ENCODE measurements at regions of chr14 and their contacts with region 1.

Region 1: GRCh38 chr14:52961060-52961639 is 10.3 kb upstream of the FERMT2 start:
- DNase-seq: peak; percentile 13
- ATAC-seq: peak; percentile 96
- H3K4me3 ChIP-seq: no peak overlapping the region
- H3K27ac ChIP-seq: no peak overlapping the region
- H3K4me1 ChIP-seq: no peaks in the 10 kb centered on the region
- H3K27me3 ChIP-seq: no peaks in the 10 kb centered on the region
- CTCF ChIP-seq: peak; percentile 58 to 82 (median 64)
- EP300 ChIP-seq: no peak
- POLR2A ChIP-seq: no peak
- RAD21 ChIP-seq: peak; percentile 95

Region 2: DNA sequence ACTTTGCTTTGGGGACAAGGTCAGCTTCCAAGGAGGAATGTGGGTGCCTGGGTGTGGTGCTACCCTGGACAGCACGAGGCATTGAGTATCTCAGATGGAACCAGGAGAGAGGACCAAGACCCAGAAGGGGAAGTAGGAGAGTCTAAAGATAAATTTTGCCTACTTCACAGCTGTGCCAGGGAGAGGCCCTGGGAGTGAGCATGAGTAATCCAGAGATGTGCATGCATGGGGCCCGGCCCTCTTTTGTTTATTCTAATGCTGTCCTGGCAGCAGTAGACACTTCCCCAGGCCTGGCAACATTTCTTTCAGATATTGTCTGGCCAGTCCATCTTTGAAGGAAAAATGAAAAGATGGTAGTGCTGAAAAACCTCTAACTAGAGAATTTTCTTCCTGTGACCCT is 120.2 kb before region 1 on chr14:
- CTCF ChIA-PET with region 1: interaction called, 11 read pairs
- POLR2A ChIA-PET with region 1: no interaction called
- RAD21 ChIA-PET with region 1: no interaction called
- SMC1A ChIA-PET with region 1: interaction called, 5 read pairs
- in situ Hi-C with region 1: no loop called
- intact Hi-C with region 1: no loop called
- DNase-seq: no peak
- ATAC-seq: peak; percentile 64
- H3K4me3 ChIP-seq: no peak overlapping the region
- H3K27ac ChIP-seq: no peak overlapping the region
- H3K4me1 ChIP-seq: no peaks in the 10 kb centered on the region
- H3K27me3 ChIP-seq: no peaks in the 10 kb centered on the region
- CTCF ChIP-seq: no peak
- EP300 ChIP-seq: no peak
- POLR2A ChIP-seq: no peak
- RAD21 ChIP-seq: no peak

Region 3: GRCh38 chr14:52923902-52924575 is 37.1 kb before region 1 on chr14:
- CTCF ChIA-PET with region 1: interaction called, 43 read pairs
- POLR2A ChIA-PET with region 1: interaction called, 3 read pairs
- RAD21 ChIA-PET with region 1: interaction called, 22 read pairs
- SMC1A ChIA-PET with region 1: interaction called, 47 read pairs
- in situ Hi-C with region 1: no loop called
- intact Hi-C with region 1: no loop called
- DNase-seq: no peak
- ATAC-seq: peak; percentile 82
- H3K4me3 ChIP-seq: no peak overlapping the region
- H3K27ac ChIP-seq: no peak overlapping the region
- H3K4me1 ChIP-seq: no peaks in the 10 kb centered on the region
- H3K27me3 ChIP-seq: no peaks in the 10 kb centered on the region
- CTCF ChIP-seq: peak; percentile 15 to 45 (median 28); a peak in 3 of 6 replicates
- EP300 ChIP-seq: no peak
- POLR2A ChIP-seq: no peak
- RAD21 ChIP-seq: peak; percentile 52

Region 4: GRCh38 chr14:52950898-52951689 is 10.1 kb before region 1 on chr14 and contains the start of gene FERMT2:
- CTCF ChIA-PET with region 1: interaction called, 23 read pairs
- POLR2A ChIA-PET with region 1: no interaction called
- RAD21 ChIA-PET with region 1: interaction called, 9 read pairs
- SMC1A ChIA-PET with region 1: interaction called, 15 read pairs
- in situ Hi-C with region 1: no loop called
- intact Hi-C with region 1: no loop called
- DNase-seq: no peak
- ATAC-seq: peak; percentile 79
- H3K4me3 ChIP-seq: peak within 1 kb of the TSS; percentile 69
- H3K27ac ChIP-seq: no peak within 1 kb of the TSS
- H3K4me1 ChIP-seq: peaks cover 3% of the 10 kb centered on the region; the same call in 1 of the 2 replicates
- H3K27me3 ChIP-seq: peaks cover 1 to 18% of the 10 kb centered on the region in 2 experiments
- CTCF ChIP-seq: no peak
- EP300 ChIP-seq: no peak
- POLR2A ChIP-seq: no peak; the same call in 1 of the 2 replicates
- RAD21 ChIP-seq: no peak
- polyA plus RNA-seq, gene FERMT2: 4.9 to 8.6 TPM

Region 5: GRCh38 chr14:52998376-52999015 is 37.3 kb after region 1 on chr14:
- CTCF ChIA-PET with region 1: no interaction called
- POLR2A ChIA-PET with region 1: no interaction called
- RAD21 ChIA-PET with region 1: no interaction called
- SMC1A ChIA-PET with region 1: no interaction called
- in situ Hi-C with region 1: no loop called
- intact Hi-C with region 1: no loop called
- DNase-seq: no peak
- ATAC-seq: no peak
- H3K4me3 ChIP-seq: no peak overlapping the region
- H3K27ac ChIP-seq: no peak overlapping the region
- H3K4me1 ChIP-seq: no peaks in the 10 kb centered on the region
- H3K27me3 ChIP-seq: no peaks in the 10 kb centered on the region
- CTCF ChIP-seq: no peak
- EP300 ChIP-seq: no peak
- POLR2A ChIP-seq: no peak
- RAD21 ChIP-seq: no peak